Ovary (tissue), 10 donors: ENCODE measurements at regions of chr2 and their contacts with region 1.

Region 1: GRCh38 chr2:69926849-69927515 is 12.1 kb downstream of the MXD1 start:
- DNase-seq: no peak
- H3K4me3 ChIP-seq: no peak overlapping the region
- H3K27ac ChIP-seq: no peak overlapping the region
- H3K4me1 ChIP-seq: no peaks in the 10 kb centered on the region
- H3K27me3 ChIP-seq: no peaks in the 10 kb centered on the region
- CTCF ChIP-seq: no peak
- EP300 ChIP-seq: no peak
- POLR2A ChIP-seq: no peak

Region 2: GRCh38 chr2:70069049-70069448 is 142.1 kb after region 1 on chr2:
- intact Hi-C with region 1: loop called in 1 of 4 experiments (anchors 10 kb)
- DNase-seq: no peak
- H3K4me3 ChIP-seq: no peak overlapping the region
- H3K27ac ChIP-seq: no peak overlapping the region
- H3K4me1 ChIP-seq: peaks cover 3% of the 10 kb centered on the region
- H3K27me3 ChIP-seq: no peaks in the 10 kb centered on the region
- CTCF ChIP-seq: no peak
- EP300 ChIP-seq: no peak
- POLR2A ChIP-seq: no peak